Activated CD8-positive, alpha-beta T cell treated with anti-CD3 and anti-CD28 coated beads, Interleukin-2, amount 10 ng/mL, durations not matched to agents 7 days and 5 days (primary cell): ENCODE measurements at regions of chr14 and their contacts with region 1.

Region 1: GRCh38 chr14:39426605-39427004 is 5.6 kb downstream of the FBXO33 start:
- DNase-seq: no peak
- ATAC-seq: no peak
- H3K4me3 Mint-ChIP-seq: no peak overlapping the region
- H3K27ac Mint-ChIP-seq: no peak overlapping the region
- H3K4me1 Mint-ChIP-seq: peaks cover 46% of the 10 kb centered on the region
- H3K27me3 Mint-ChIP-seq: no peaks in the 10 kb centered on the region

Region 2: DNA sequence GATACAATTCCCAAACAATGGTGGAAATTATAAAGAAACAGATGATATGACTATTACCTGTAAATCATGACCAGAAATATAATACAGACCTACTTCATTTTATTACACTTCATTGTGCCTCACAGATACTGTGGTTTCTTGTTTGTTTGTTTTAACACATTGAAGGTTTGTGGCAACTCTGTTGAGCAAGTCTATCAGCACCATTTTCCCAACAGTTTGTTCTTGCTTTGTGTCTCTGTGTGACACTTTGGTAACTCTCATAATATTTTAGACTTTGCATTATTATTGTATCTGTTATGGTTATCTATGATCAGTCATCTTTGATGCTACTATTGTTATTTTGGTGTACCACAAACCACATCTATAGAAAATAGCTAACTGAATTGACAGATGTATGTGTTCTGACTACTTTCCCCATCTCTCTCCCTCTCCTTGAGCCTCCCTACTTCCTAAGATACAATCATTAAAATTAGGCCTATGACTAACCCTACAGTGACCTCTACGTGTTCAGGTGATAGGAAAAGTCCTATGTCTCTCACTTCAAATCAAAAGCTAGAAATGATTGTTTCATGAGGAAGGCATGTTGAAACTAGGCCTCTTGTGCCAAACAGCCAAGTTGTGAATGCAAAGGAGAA is 43.5 kb before region 1 on chr14:
- CTCF ChIA-PET with region 1: interaction called, 17 read pairs
- POLR2A ChIA-PET with region 1: interaction called, 15 read pairs
- DNase-seq: no peak
- ATAC-seq: peak; percentile 61
- H3K4me3 Mint-ChIP-seq: no peak overlapping the region
- H3K27ac Mint-ChIP-seq: no peak overlapping the region
- H3K4me1 Mint-ChIP-seq: peaks cover 25% of the 10 kb centered on the region
- H3K27me3 Mint-ChIP-seq: no peaks in the 10 kb centered on the region

Region 3: GRCh38 chr14:39396448-39396847 is 30.2 kb before region 1 on chr14:
- CTCF ChIA-PET with region 1: interaction called, 15 read pairs
- POLR2A ChIA-PET with region 1: interaction called, 5 read pairs
- DNase-seq: no peak
- ATAC-seq: no peak
- H3K4me3 Mint-ChIP-seq: no peak overlapping the region
- H3K27ac Mint-ChIP-seq: no peak overlapping the region
- H3K4me1 Mint-ChIP-seq: no peaks in the 10 kb centered on the region
- H3K27me3 Mint-ChIP-seq: no peaks in the 10 kb centered on the region

Region 4: DNA sequence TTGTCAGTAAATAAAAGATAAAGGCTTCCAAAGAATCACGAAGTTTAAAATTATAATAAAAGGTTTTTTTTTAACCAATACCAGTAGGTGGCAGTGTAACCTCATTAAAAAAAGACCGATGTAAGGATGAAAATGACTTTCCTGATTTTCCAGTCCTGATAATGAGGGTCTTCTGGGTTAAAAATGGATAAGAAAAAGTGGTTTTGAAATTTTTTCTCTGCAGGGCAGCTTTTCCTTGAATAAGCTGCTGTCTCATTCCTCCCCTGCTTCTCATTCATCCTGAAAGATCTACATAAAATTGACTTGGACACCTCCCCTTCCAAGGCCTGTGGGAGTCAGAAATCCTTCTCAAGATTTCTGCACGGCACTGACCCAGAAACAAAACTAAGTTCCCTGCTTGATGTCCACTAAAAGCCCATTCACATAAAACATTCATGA is 64.5 kb after region 1 on chr14:
- CTCF ChIA-PET with region 1: no interaction called
- POLR2A ChIA-PET with region 1: no interaction called
- DNase-seq: no peak
- ATAC-seq: no peak
- H3K4me3 Mint-ChIP-seq: no peak overlapping the region
- H3K27ac Mint-ChIP-seq: no peak overlapping the region
- H3K4me1 Mint-ChIP-seq: no peaks in the 10 kb centered on the region
- H3K27me3 Mint-ChIP-seq: peaks cover 3% of the 10 kb centered on the region